Activated CD4-positive, alpha-beta memory T cell treated with anti-CD3 and anti-CD28 coated beads for 36 hours (primary cell): ENCODE measurements at regions of chr16 and their contacts with region 1.

Region 1: GRCh38 chr16:14070877-14071575 is at the start of gene MRTFB:
- DNase-seq: peak; percentile 82
- H3K4me3 Mint-ChIP-seq: peak within 1 kb of the TSS; percentile 83
- H3K27ac Mint-ChIP-seq: peak within 1 kb of the TSS; percentile 33
- H3K4me1 Mint-ChIP-seq: peaks cover 12% of the 10 kb centered on the region
- H3K27me3 Mint-ChIP-seq: no peaks in the 10 kb centered on the region
- total RNA-seq, gene MRTFB: 8.8 to 9.7 TPM

Region 2: GRCh38 chr16:13083681-13084080 is 987.3 kb before region 1 on chr16:
- CTCF ChIA-PET with region 1: no interaction called
- POLR2A ChIA-PET with region 1: no interaction called
- intact Hi-C with region 1: no loop called
- DNase-seq: no peak
- H3K4me3 Mint-ChIP-seq: no peak overlapping the region
- H3K27ac Mint-ChIP-seq: no peak overlapping the region
- H3K4me1 Mint-ChIP-seq: no peaks in the 10 kb centered on the region
- H3K27me3 Mint-ChIP-seq: no peaks in the 10 kb centered on the region

Region 3: DNA sequence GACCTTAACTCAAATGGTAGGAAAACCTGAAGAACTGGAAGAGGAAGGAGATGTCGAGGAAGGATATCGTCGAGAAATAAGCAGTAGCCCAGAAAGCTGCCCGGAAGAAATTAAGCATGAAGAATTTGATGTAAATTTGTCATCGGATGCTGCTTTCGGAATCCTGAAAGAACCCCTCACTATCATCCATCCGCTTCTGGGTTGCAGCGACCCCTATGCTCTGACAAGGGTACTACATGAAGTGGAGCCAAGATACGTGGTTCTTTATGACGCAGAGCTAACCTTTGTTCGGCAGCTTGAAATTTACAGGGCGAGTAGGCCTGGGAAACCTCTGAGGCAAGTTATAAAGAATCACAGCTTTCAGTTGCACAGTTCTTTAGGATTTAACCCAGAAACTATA is 135.6 kb before region 1 on chr16:
- CTCF ChIA-PET with region 1: no interaction called
- POLR2A ChIA-PET with region 1: no interaction called
- intact Hi-C with region 1: loop called (anchors 5 kb)
- DNase-seq: peak; percentile 23
- H3K4me3 Mint-ChIP-seq: no peak overlapping the region
- H3K27ac Mint-ChIP-seq: no peak overlapping the region
- H3K4me1 Mint-ChIP-seq: peaks cover 15% of the 10 kb centered on the region
- H3K27me3 Mint-ChIP-seq: no peaks in the 10 kb centered on the region

Region 4: DNA sequence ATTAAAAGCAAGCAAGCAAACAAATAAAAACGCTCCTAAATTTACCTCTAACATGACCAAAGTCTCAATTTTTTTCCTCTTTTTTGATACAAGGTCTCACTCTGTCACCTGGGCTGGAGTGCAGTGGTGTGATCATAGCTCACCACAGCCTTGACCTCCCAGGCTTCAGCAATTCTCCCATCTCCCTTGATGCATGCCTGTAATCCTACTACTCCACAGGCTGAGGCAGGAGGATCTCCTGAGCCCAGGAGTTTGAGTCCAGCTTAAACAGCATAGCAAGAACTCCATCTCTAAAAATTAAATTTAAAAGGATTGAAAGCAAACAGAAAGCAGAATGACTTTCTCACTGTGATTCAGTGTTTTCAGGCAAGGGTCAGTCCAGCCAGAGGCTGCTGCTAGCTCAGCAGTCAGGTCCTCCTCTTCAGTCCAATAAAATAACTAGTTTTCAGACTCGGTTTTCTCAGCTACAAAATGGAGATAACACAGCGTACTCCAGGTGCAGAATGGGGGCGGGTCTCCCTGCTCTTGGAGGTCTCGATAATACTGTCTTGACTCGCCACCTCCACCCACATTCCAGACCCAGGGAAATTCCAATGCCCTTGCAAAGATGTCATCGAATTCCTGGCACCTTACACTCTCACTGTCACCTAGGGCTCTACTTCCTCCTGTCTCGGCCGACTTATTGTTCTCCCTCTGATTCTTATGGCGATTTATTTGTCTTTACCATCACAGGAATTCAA is 20.6 kb before region 1 on chr16:
- CTCF ChIA-PET with region 1: no interaction called
- POLR2A ChIA-PET with region 1: no interaction called
- intact Hi-C with region 1: no loop called
- DNase-seq: no peak
- H3K4me3 Mint-ChIP-seq: no peak overlapping the region
- H3K27ac Mint-ChIP-seq: no peak overlapping the region
- H3K4me1 Mint-ChIP-seq: no peaks in the 10 kb centered on the region
- H3K27me3 Mint-ChIP-seq: no peaks in the 10 kb centered on the region

Region 5: GRCh38 chr16:14087590-14088154 is 16.6 kb after region 1 on chr16:
- CTCF ChIA-PET with region 1: no interaction called
- POLR2A ChIA-PET with region 1: no interaction called
- intact Hi-C with region 1: no loop called
- DNase-seq: no peak
- H3K4me3 Mint-ChIP-seq: no peak overlapping the region
- H3K27ac Mint-ChIP-seq: no peak overlapping the region
- H3K4me1 Mint-ChIP-seq: peaks cover 10% of the 10 kb centered on the region
- H3K27me3 Mint-ChIP-seq: no peaks in the 10 kb centered on the region